ENCODE measurements at regions of chr20 and their contacts with region 1.

Region 1: GRCh38 chr20:44115762-44116644 is 71.0 kb downstream of the JPH2 start:
- DNase-seq: no peak
- H3K4me3 ChIP-seq: no peak overlapping the region
- H3K27ac ChIP-seq: no peak overlapping the region
- H3K4me1 ChIP-seq: peaks cover 7% of the 10 kb centered on the region
- H3K27me3 ChIP-seq: no peaks in the 10 kb centered on the region
- CTCF ChIP-seq: no peak
- POLR2A ChIP-seq: no peak

Region 2: GRCh38 chr20:43537921-43538877 is 577.8 kb before region 1 on chr20:
- intact Hi-C with region 1: no loop called
- DNase-seq: peak in 1 of 2 donors; percentile 52
- H3K4me3 ChIP-seq: no peak overlapping the region
- H3K27ac ChIP-seq: no peak overlapping the region
- H3K4me1 ChIP-seq: no peaks in the 10 kb centered on the region
- H3K27me3 ChIP-seq: no peaks in the 10 kb centered on the region
- CTCF ChIP-seq: peak; percentile 42 to 86 (median 67)
- POLR2A ChIP-seq: no peak

Region 3: DNA sequence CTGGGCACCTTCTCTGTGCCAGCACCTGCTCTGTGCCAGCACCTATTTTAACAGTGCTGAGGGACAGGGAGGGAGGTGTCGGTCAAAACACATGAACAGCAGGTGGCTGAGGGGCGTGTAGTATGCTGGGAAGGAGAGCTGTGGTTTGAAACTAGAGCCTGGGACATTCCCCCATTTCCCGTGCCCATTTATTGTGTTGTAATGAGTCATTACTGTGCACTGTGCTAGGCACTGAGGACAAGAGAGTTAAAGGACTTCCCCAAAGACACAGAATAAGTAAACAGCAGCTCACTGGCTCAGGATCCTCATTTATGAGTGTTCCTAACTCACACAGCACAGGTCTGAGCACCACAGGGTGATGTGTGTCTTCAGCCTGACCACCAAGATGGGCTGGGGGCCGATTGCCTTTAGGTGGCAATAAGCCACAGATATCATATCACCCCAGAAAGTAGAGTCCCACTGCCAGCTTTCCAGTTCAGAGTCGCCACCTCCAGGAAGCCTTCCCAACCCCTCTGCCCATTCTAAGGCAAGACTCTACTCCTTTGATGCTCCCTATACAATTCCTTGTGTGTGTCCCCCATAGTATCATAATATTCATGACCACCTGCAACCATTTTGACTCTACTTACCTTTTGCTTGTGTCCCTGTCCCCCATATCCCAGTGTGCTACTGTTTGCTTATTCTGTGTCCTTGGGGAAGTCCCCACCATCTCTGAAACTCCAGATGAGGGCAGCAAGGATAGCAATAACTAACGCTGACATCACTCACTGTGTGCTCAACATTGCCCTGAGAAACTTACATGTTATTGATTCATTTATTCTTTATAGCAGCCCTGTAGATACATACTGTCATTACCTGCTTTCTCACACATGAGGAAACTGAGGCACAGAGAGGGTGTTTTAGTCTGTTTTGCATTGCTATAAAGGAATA is 114.1 kb before region 1 on chr20:
- intact Hi-C with region 1: no loop called
- DNase-seq: peak in 1 of 2 donors; percentile 29
- H3K4me3 ChIP-seq: no peak overlapping the region
- H3K27ac ChIP-seq: no peak overlapping the region
- H3K4me1 ChIP-seq: no peaks in the 10 kb centered on the region
- H3K27me3 ChIP-seq: no peaks in the 10 kb centered on the region
- CTCF ChIP-seq: no peak
- POLR2A ChIP-seq: no peak

Region 4: DNA sequence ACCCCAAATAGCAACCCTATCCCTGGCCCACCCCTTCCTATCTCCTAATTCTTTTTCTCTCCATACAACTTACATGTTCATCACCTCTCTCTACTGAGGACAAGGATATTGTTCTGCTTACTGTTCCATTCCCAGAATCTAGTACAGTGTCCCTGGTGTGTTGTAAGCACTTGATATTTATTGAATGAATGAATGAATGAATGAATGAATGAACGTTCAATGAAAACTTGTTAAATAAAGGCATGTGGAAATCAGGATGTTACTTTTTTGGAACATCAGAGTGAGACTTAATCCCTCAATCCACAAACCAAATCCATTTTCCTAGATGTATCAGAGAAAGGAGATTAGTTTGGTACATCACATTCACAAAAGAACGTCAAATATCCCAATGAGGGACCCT is 77.8 kb after region 1 on chr20:
- intact Hi-C with region 1: loop called (anchors 5 kb)
- DNase-seq: no peak
- H3K4me3 ChIP-seq: no peak overlapping the region
- H3K27ac ChIP-seq: no peak overlapping the region
- H3K4me1 ChIP-seq: peaks cover under 1% of the 10 kb centered on the region
- H3K27me3 ChIP-seq: no peaks in the 10 kb centered on the region
- CTCF ChIP-seq: no peak
- POLR2A ChIP-seq: no peak

Region 5: GRCh38 chr20:44733341-44734069 is 617.5 kb after region 1 on chr20:
- intact Hi-C with region 1: no loop called
- DNase-seq: no peak
- H3K4me3 ChIP-seq: no peak overlapping the region
- H3K27ac ChIP-seq: peak overlapping the region; percentile 54
- H3K4me1 ChIP-seq: peaks cover 18% of the 10 kb centered on the region
- H3K27me3 ChIP-seq: no peaks in the 10 kb centered on the region
- CTCF ChIP-seq: peak; percentile 79 to 97 (median 86)
- POLR2A ChIP-seq: no peak